ENCODE measurements at regions of chr1 and their contacts with region 1.

Region 1: DNA sequence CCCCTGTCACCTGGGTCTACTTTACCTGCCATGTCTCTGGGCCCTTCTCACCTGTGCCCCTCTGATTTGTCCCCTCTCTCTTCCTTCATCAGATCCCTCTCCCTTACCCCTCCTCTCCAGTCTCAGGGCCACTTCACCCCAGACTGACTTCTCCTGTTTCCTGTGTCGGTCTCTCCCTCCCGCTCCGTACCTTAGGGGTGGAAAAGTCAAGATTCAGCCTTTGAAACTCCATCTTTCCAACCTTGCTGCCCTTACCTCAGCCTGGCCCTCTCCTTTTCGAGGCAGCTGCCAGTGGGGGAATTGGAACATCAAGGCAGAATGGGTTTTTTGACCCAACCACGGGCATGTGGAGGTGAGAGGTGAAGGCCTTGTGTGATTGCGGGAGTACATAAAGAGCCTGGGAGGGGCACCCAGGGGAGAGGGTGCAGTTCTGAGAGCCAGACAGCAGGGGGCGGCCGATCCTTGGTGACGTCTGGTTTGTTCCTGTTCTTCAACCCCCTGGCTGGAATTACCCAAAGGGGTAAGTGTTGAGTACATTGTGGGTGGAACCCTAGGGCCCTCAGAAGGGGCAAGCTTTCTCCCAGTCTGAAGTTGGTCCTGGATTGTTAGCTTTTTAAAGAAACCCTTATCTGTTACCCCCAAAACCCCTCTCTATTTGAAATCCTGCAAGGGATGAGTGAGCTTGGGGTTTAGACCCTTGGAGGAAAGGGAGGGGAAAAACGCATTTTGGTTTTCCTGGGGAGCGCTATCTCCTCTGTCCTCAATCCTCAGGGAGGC is 12.3 kb upstream of the DMBX1 start:
- DNase-seq: peak; percentile 58
- H3K4me3 ChIP-seq: no peak overlapping the region
- H3K27ac ChIP-seq: no peak overlapping the region
- H3K4me1 ChIP-seq: no peaks in the 10 kb centered on the region
- H3K27me3 ChIP-seq: no peaks in the 10 kb centered on the region
- CTCF ChIP-seq: peak; percentile 86 to 90

Region 2: DNA sequence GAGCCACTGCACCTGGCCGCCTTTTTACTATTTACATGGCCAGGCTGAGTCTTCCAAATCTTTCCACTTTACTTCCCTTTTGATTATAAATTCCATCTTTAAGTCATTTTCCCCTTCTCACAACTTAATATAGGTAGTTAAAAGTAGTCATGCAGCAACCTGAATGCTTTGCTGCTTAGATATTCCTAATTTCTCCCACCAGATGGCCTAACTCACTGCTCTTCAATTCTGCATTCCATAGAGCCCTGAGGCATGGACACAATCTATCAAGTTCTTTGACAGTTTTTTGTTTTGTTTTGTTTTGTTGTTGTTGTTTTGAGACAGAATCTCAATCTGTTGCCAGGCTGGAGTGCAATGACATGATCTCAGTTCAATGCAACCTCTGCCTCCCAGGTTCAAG is 104.9 kb before region 1 on chr1:
- CTCF ChIA-PET with region 1: no interaction called
- dilution Hi-C with region 1: no loop called
- in situ Hi-C with region 1: no loop called
- intact Hi-C with region 1: no loop called
- DNase-seq: no peak
- H3K4me3 ChIP-seq: no peak overlapping the region
- H3K27ac ChIP-seq: no peak overlapping the region
- H3K4me1 ChIP-seq: peaks cover 11% of the 10 kb centered on the region
- H3K27me3 ChIP-seq: no peaks in the 10 kb centered on the region
- CTCF ChIP-seq: peak in 1 of 2 donors; percentile 5

Region 3: GRCh38 chr1:46408356-46409062 is 68.8 kb before region 1 on chr1:
- CTCF ChIA-PET with region 1: no interaction called
- dilution Hi-C with region 1: no loop called
- in situ Hi-C with region 1: no loop called
- intact Hi-C with region 1: loop called (anchors 1 kb)
- DNase-seq: no peak
- H3K4me3 ChIP-seq: no peak overlapping the region
- H3K27ac ChIP-seq: no peak overlapping the region
- H3K4me1 ChIP-seq: peaks cover 3% of the 10 kb centered on the region
- H3K27me3 ChIP-seq: no peaks in the 10 kb centered on the region
- CTCF ChIP-seq: no peak

Measured in mammary epithelial cell (primary cell).